Heart right ventricle (tissue), 16 donors: ENCODE measurements at regions of chr11 and their contacts with region 1.

Region 1: DNA sequence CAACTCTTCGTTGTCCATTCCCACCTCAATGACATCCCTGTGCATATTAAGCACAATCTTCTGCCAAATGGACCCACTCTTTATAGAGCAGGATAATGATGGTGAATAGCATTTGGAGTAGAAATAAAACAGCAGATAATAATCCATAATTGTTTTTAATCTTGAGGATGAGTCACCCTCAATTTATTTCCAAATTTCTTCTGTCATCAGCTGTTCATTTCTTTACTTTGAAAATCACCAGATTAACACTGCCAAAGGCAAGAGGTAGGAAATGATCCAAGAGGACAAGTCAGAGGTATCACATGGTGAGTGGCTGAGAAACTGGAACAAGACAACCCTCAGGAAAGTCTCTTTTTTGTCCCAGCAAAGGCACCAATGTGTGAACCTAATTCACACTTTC is 7.3 kb upstream of the AMBRA1 start:
- DNase-seq: no peak
- ATAC-seq: no peak
- H3K4me3 ChIP-seq: no peak overlapping the region
- H3K27ac ChIP-seq: peak overlapping the region in 6 of 10 donors; percentile 14 to 65 (median 44)
- H3K4me1 ChIP-seq: peaks cover 0 to 21% (median 13%) of the 10 kb centered on the region in 9 donors
- H3K27me3 ChIP-seq: no peaks in the 10 kb centered on the region
- CTCF ChIP-seq: no peak

Region 2: GRCh38 chr11:46392421-46393230 is 208.5 kb before region 1 on chr11:
- intact Hi-C with region 1: loop called in 1 of 10 experiments (anchors 10 kb)
- DNase-seq: peak; percentile 84 to 91
- ATAC-seq: peak; percentile 88 to 94 (median 92)
- H3K4me3 ChIP-seq: peak overlapping the region; percentile 25 to 54 (median 48)
- H3K27ac ChIP-seq: no peak overlapping the region
- H3K4me1 ChIP-seq: peaks cover 19 to 49% (median 34%) of the 10 kb centered on the region in 9 donors
- H3K27me3 ChIP-seq: peaks cover 21 to 55% (median 45%) of the 10 kb centered on the region in 7 donors
- CTCF ChIP-seq: peak in 1 of 9 donors; percentile 13